Uterus (tissue), 4 donors: ENCODE measurements at regions of chr14 and their contacts with region 1.

Region 1: GRCh38 chr14:35416108-35416750 is 11.7 kb upstream of the NFKBIA start:
- DNase-seq: no peak
- H3K4me3 ChIP-seq: no peak overlapping the region
- H3K27ac ChIP-seq: no peak overlapping the region
- H3K4me1 ChIP-seq: no peaks in the 10 kb centered on the region
- H3K27me3 ChIP-seq: no peaks in the 10 kb centered on the region
- CTCF ChIP-seq: no peak
- POLR2A ChIP-seq: no peak

Region 2: GRCh38 chr14:35140718-35141581 is 275.3 kb before region 1 on chr14:
- intact Hi-C with region 1: loop called (anchors 5 kb)
- DNase-seq: no peak
- H3K4me3 ChIP-seq: no peak overlapping the region
- H3K27ac ChIP-seq: no peak overlapping the region
- H3K4me1 ChIP-seq: no peaks in the 10 kb centered on the region
- H3K27me3 ChIP-seq: no peaks in the 10 kb centered on the region
- CTCF ChIP-seq: peak in 2 of 4 experiments; percentile 51 to 53
- POLR2A ChIP-seq: no peak

Region 3: DNA sequence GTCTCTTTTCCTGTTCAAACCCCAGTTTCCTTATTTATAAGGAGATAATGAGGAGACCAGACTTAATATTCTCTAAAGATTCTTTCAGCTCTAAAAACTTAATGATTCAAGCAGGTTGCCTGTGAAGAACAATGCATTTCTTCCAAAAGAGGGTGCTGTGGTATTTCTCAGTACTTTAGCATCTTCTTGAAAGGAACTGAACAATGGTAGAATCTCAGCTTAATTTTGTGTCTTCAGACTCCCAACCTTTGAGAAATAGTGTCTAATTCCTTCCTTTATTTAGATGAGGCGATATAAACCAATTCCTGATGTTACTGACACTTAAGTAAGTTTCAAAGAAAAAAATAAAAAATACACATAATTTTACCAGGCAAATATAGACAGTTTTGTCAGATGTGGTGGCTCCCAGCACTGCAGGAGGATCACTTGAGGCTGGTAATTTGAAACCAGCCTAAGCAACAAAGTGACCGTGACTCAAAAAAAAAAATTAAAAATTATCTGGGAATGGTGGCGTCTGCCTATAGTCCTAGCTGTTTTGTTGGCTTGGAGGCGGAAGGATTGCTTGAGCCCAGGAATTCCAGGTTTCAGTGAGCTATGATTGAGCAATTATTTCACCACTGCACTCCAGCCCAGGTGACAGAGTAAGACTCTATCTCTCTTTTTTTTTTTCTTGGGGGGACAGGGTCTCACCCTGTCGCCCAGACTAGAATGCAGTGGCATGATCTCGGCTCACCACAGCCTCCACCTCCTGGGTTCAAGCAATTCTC is 200.9 kb before region 1 on chr14:
- intact Hi-C with region 1: loop called (anchors 10 kb)
- DNase-seq: no peak
- H3K4me3 ChIP-seq: no peak overlapping the region
- H3K27ac ChIP-seq: no peak overlapping the region
- H3K4me1 ChIP-seq: no peaks in the 10 kb centered on the region
- H3K27me3 ChIP-seq: no peaks in the 10 kb centered on the region
- CTCF ChIP-seq: peak; percentile 51 to 69 (median 64)
- POLR2A ChIP-seq: no peak